Ascending aorta (tissue), 2 donors: ENCODE measurements at regions of chr1 and their contacts with region 1.

Region 1: GRCh38 chr1:109112652-109113285 is 1.1 kb upstream of the ELAPOR1 start:
- DNase-seq: peak; percentile 74 to 97
- H3K4me3 ChIP-seq: peak overlapping the region; percentile 47 to 60
- H3K27ac ChIP-seq: no peak overlapping the region
- H3K4me1 ChIP-seq: peaks cover 5 to 8% of the 10 kb centered on the region in 2 donors
- H3K27me3 ChIP-seq: peaks cover 6% of the 10 kb centered on the region
- CTCF ChIP-seq: peak; percentile 86 to 95 (median 92)

Region 2: DNA sequence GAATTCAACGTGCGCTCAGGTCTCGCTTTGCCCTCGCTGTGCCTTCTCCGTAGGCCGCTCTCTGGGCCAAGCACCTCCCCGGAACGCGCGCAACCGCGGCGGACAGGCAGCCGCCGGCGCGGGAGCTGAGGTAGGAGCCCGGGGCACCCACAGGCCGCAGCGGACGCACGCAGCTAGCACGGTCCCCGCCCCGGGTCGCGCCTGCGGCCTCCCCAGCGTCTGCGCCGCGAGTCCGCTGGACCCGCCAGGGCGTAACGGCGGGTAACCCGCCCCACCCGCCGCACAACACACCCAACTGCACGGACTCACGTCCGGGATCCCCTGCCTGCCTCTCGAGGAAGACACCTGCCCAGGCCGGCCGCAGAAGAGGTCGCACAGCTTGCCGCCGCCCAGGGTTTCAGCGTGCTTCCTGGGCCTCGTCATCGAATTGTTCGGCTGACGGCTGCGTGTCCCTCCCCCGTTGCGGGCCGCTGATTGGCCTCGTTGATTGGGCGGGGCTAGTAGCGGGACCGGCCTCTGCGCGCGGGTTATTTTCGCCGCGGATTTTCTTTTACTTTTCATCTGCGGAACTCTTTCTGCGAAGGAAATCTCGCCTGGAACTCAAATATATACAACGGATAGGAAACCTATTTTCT is 149.6 kb before region 1 on chr1 and contains the start of gene CLCC1:
- intact Hi-C with region 1: loop called (anchors 5 kb)
- DNase-seq: peak; percentile 71 to 96
- H3K4me3 ChIP-seq: peak within 1 kb of the TSS; percentile 76 to 91
- H3K27ac ChIP-seq: peak within 1 kb of the TSS; percentile 93 to 97
- H3K4me1 ChIP-seq: peaks cover 11 to 13% of the 10 kb centered on the region in 2 donors
- H3K27me3 ChIP-seq: no peaks in the 10 kb centered on the region
- CTCF ChIP-seq: no peak
- total RNA-seq, gene CLCC1: 18.1 TPM

Region 3: DNA sequence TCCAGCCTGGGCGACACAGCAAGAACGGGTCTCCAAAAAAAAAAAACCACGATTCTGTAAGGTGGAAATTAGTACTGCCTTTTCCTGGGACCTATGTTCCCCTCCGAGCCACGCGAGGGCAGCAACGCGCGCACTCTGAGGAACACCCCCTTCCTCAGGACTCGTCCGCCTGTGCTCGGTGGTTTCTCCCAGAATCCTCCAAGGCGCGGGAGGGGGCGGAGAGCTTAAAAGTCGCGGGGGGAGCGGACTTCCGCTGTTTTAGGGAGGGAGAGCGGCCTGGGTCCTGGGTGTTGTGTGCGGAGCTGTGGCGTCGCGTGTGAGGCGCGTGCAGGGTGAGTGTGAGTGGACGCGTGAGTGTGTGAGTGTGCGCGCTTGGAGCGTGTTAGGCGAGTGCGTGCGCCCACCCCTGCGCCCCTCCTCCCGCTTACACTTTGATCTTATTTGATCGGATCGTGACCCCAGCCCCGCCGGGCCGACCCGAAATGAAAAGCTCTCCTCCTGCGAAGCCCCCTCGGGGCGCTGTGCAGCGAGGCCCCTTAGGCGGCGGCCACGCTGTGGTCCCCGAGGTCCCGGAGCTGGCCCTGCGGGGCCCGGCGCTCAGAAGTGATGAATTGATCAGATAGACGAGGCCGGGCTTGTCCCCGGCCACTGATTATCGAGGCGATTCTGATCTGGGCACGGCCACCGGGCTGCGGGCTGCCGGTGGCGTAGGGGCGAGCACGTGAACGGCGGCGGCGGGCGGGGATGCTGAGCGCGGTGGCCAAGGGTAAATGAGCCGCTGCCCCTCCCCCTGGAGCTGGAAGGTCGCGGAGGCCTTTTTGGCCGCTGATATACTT is 12.6 kb before region 1 on chr1:
- intact Hi-C with region 1: loop called (anchors 1 kb)
- DNase-seq: peak; percentile 87 to 99
- H3K4me3 ChIP-seq: peak overlapping the region; percentile 79 to 90
- H3K27ac ChIP-seq: peak overlapping the region; percentile 96
- H3K4me1 ChIP-seq: peaks cover 0 to 2% of the 10 kb centered on the region in 2 donors
- H3K27me3 ChIP-seq: no peaks in the 10 kb centered on the region
- CTCF ChIP-seq: peak; percentile 68 to 92 (median 87)

Region 4: GRCh38 chr1:109283748-109284600 is 171.2 kb after region 1 on chr1:
- intact Hi-C with region 1: no loop called
- DNase-seq: peak in 1 of 2 donors; percentile 64
- H3K4me3 ChIP-seq: peak overlapping the region; percentile 66 to 84
- H3K27ac ChIP-seq: peak overlapping the region; percentile 84 to 91
- H3K4me1 ChIP-seq: peaks cover 0 to 13% of the 10 kb centered on the region in 2 donors
- H3K27me3 ChIP-seq: no peaks in the 10 kb centered on the region
- CTCF ChIP-seq: no peak

Region 5: GRCh38 chr1:109493805-109494539 is 381.2 kb after region 1 on chr1 and contains the start of gene CYB561D1:
- intact Hi-C with region 1: no loop called
- DNase-seq: peak; percentile 35 to 92
- H3K4me3 ChIP-seq: peak within 1 kb of the TSS; percentile 61 to 89
- H3K27ac ChIP-seq: peak within 1 kb of the TSS; percentile 78 to 84
- H3K4me1 ChIP-seq: peaks cover 7 to 18% of the 10 kb centered on the region in 2 donors
- H3K27me3 ChIP-seq: no peaks in the 10 kb centered on the region
- CTCF ChIP-seq: peak; percentile 92 to 98 (median 95)
- total RNA-seq, gene CYB561D1: 26.8 TPM